PC-3 (cell line): ENCODE measurements at regions of chr14 and their contacts with region 1.

Region 1: GRCh38 chr14:32494609-32495434 is 165.7 kb downstream of the AKAP6 start:
- DNase-seq: no peak
- ATAC-seq: peak; percentile 57
- H3K4me3 ChIP-seq: no peak overlapping the region
- H3K27ac ChIP-seq: no peak overlapping the region
- H3K4me1 ChIP-seq: no peaks in the 10 kb centered on the region
- H3K27me3 ChIP-seq: no peaks in the 10 kb centered on the region
- CTCF ChIP-seq: no peak

Region 2: GRCh38 chr14:32480337-32480736 is 14.5 kb before region 1 on chr14:
- CTCF ChIA-PET with region 1: no interaction called
- POLR2A ChIA-PET with region 1: no interaction called
- intact Hi-C with region 1: loop called (anchors 2 kb)
- DNase-seq: no peak
- ATAC-seq: peak; percentile 72
- H3K4me3 ChIP-seq: no peak overlapping the region
- H3K27ac ChIP-seq: no peak overlapping the region
- H3K4me1 ChIP-seq: 0 out of 2 replicates have a peak, but pooled peaks cover 5% of the 10 kb centered on the region
- H3K27me3 ChIP-seq: no peaks in the 10 kb centered on the region
- CTCF ChIP-seq: no peak